Common myeloid progenitor, CD34-positive (primary cell): ENCODE measurements at regions of chr22 and their contacts with region 1.

Region 1: DNA sequence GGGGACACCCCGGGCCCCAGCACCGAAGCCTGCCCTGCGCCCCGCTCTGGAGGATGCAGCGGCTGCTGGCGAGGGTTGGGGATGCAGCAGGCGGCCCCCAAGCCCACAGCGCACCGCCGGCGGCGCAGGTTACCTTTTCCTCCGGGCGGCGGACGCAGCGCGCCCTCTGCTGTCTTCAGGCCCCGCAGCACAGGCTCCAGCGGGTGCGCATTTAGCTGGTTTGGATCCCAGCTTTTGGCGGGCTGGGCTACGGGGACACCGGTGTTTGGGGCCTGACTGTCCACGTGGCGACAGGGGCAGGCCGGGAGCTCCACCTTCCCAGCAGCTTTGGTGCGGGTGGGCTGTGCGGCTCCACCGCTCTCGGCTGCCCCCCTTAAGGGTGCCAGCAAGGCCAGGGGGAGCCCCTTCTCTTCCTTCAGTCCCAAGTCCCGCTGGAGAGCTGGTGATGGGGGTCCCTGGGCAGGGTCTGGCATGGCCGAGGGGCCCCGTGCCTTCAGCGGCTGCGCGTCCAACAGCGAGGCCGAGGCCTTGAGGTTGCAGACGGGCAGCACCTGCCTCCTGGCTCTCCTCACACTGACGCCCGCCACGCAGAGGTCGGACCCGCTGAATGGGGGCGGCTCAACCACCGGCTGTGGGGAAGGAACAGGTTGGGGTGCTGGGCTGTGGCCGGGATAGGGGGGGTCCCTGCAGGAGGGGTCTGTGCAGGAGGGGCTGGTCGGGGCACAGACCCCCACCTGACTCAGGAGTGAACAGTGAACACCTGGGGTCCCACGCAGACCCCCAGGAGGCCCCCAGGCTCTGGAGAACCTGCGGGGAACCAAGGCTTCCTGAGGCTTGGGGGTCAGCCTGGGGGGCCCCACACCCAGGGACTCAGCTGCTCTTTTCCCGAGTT is 18.0 kb upstream of the IL17REL start:
- DNase-seq: peak; percentile 87 to 93 (median 93)
- H3K4me3 ChIP-seq: peak overlapping the region in 2 of 7 experiments; percentile 32 to 60
- H3K27ac ChIP-seq: no peak overlapping the region
- H3K4me1 ChIP-seq: peaks cover 0 to 41% (median 21%) of the 10 kb centered on the region in 4 experiments
- H3K27me3 ChIP-seq: peaks cover 0 to 2% (median 0%) of the 10 kb centered on the region in 5 experiments

Region 2: DNA sequence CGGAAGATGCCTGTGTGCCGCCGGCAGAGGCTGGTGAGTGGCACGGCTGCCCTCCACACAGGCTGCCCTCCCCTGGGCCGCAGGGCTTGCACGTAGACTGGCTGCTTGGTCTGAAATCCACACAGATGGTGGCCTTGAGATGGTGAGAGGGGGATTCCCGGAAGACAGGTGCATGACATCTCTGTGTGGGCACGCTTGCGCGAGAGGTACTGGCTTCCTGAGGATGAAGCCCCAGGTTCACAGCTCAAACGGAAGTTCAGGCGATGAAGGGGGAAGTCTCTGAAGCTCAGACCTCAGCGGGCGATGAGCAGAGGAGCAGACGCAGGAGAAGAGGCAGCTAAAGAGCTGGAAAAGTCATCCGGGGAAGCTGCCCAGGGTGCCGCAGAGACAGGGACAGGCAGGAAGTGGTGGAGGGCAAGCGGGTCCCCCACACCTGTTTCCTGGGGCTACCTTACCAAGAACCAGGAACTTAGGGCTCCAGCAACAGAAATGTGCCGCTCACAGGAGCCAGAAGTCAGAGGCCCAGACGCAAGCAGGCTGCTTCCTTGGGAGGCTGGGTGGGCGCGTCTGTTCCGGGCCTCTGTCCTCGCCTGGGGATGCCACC is 104.9 kb before region 1 on chr22:
- CTCF ChIA-PET with region 1: interaction called, 63 read pairs
- POLR2A ChIA-PET with region 1: interaction called, 19 read pairs
- DNase-seq: peak; percentile 61 to 92 (median 91)
- H3K4me3 ChIP-seq: peak overlapping the region in 4 of 7 experiments; percentile 17 to 43 (median 39)
- H3K27ac ChIP-seq: peak overlapping the region in 1 of 2 experiments; percentile 27
- H3K4me1 ChIP-seq: peaks cover 10 to 47% (median 44%) of the 10 kb centered on the region in 4 experiments
- H3K27me3 ChIP-seq: no peaks in the 10 kb centered on the region

Region 3: GRCh38 chr22:49992921-49993648 is 37.5 kb before region 1 on chr22:
- CTCF ChIA-PET with region 1: interaction called, 13 read pairs
- POLR2A ChIA-PET with region 1: no interaction called
- DNase-seq: peak; percentile 60 to 72 (median 72)
- H3K4me3 ChIP-seq: peak overlapping the region in 1 of 7 experiments; percentile 30
- H3K27ac ChIP-seq: no peak overlapping the region
- H3K4me1 ChIP-seq: peaks cover 0 to 10% (median 4%) of the 10 kb centered on the region in 4 experiments
- H3K27me3 ChIP-seq: no peaks in the 10 kb centered on the region

Region 4: GRCh38 chr22:50329236-50329635 is 298.7 kb after region 1 on chr22:
- CTCF ChIA-PET with region 1: no interaction called
- POLR2A ChIA-PET with region 1: no interaction called
- DNase-seq: peak in 2 of 3 donors; percentile 64 to 75
- H3K4me3 ChIP-seq: no peak overlapping the region
- H3K27ac ChIP-seq: no peak overlapping the region
- H3K4me1 ChIP-seq: peaks cover 0 to 17% (median 15%) of the 10 kb centered on the region in 4 experiments
- H3K27me3 ChIP-seq: peaks cover 0 to 6% (median 0%) of the 10 kb centered on the region in 5 experiments